CD8-positive, alpha-beta T cell (primary cell): ENCODE measurements at regions of chr15 and their contacts with region 1.

Region 1: GRCh38 chr15:64893481-64894394 is 18.0 kb upstream of the ANKDD1A start:
- DNase-seq: peak; percentile 82 to 98 (median 95)
- ATAC-seq: peak; percentile 70
- H3K4me3 ChIP-seq: peak overlapping the region; percentile 42 to 64
- H3K4me3 Mint-ChIP-seq: peak overlapping the region; percentile 87
- H3K27ac ChIP-seq: peak overlapping the region; percentile 73 to 88
- H3K27ac Mint-ChIP-seq: peak overlapping the region; percentile 99
- H3K4me1 ChIP-seq: peaks cover 57% of the 10 kb centered on the region
- H3K4me1 Mint-ChIP-seq: peaks cover 66% of the 10 kb centered on the region
- H3K27me3 ChIP-seq: no peaks in the 10 kb centered on the region
- H3K27me3 Mint-ChIP-seq: no peaks in the 10 kb centered on the region
- CTCF ChIP-seq: no peak

Region 2: DNA sequence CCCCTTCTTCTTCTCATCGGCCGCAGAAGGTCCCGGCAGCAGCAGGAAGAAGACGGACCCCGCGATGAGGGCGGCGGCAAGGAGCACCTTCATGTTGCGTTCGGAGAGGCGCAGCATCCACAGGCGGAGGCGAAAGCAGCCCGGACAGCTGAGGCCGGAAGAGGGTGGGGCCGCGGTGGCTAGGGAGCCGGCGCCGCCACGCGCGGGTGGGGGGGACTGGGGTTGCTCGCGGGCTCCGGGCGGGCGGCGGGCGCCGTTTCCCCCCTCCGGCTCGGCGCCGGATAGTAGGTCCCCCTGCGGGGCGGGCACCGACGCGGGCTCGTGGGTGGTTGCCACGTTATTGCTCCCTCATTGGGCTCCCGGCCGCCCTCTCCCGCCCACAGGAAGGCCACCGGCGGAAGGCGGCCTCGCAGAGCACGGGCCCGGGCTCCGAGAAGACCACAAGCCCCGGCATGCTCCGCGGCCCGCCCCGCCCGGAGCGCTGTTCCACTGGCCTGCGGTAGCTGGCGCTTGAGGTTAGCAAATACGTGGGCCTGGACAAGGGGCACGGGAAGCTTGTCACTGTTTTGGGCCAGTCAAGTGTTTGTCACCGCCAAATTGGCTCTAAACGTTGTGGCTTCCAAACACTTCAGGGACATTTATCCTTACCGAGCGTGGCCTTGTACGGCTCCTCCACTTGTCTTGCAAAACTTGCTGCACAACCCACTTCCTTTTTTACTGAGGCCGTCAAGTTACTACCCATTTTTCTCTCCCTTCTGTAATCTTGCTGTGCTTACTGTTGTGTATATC is 730.7 kb before region 1 on chr15 and contains the start of gene PPIB:
- CTCF ChIA-PET with region 1: no interaction called
- POLR2A ChIA-PET with region 1: interaction called, 6 read pairs
- intact Hi-C with region 1: loop called in 1 of 2 experiments (anchors 1 kb)
- DNase-seq: peak; percentile 93 to 98 (median 96)
- ATAC-seq: peak; percentile 93
- H3K4me3 ChIP-seq: peak within 1 kb of the TSS; percentile 88 to 92
- H3K4me3 Mint-ChIP-seq: peak within 1 kb of the TSS; percentile 90
- H3K27ac ChIP-seq: peak within 1 kb of the TSS; percentile 79 to 88
- H3K27ac Mint-ChIP-seq: peak within 1 kb of the TSS; percentile 87
- H3K4me1 ChIP-seq: peaks cover 38% of the 10 kb centered on the region
- H3K4me1 Mint-ChIP-seq: peaks cover 41% of the 10 kb centered on the region
- H3K27me3 ChIP-seq: no peaks in the 10 kb centered on the region
- H3K27me3 Mint-ChIP-seq: no peaks in the 10 kb centered on the region
- CTCF ChIP-seq: no peak
- total RNA-seq, gene PPIB: 148 to 156 TPM

Region 3: DNA sequence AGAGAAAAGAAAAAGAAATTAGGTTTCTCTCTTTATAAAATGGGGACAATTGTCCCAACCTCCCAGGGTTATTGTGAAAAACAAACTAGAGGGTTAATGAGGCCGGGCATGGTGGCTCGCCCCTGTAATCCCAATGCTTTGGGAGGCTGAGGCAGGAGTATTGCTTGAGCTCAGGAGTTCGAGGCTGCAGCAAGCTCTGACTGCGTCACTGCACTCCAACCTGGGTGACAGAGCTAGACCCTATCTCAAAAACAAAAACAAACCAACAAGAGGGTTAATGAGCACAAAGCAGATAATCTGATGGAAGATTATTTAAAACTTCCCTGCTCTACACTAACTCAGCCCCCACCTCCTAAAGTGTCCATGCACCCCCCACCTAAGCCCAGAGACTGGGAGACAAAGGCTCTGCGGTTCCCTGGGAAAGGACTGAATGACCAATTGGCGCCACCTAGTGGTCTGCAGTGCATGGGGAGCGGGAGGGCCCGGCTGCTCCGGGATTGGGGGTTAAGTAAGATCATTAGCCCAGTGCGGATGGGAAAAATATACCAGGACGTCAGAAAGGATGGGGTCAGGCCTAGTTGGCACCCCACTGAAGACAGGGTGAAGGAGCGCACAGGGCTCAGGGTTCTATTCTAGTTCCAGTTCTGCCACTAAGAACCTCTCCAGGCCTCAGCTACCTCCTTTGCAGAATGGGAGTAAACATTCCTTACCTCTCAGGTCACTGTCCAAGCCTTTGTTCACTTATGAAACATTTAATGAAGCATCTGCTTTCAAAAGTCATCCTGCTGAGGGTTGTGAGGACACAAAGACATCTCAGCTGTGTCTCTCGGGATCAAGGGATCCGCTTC is 83.9 kb before region 1 on chr15:
- CTCF ChIA-PET with region 1: interaction called, 18 read pairs
- POLR2A ChIA-PET with region 1: interaction called, 3 read pairs
- intact Hi-C with region 1: no loop called
- DNase-seq: peak; percentile 27 to 78 (median 67)
- ATAC-seq: peak; percentile 71
- H3K4me3 ChIP-seq: no peak overlapping the region
- H3K4me3 Mint-ChIP-seq: no peak overlapping the region
- H3K27ac ChIP-seq: no peak overlapping the region
- H3K27ac Mint-ChIP-seq: no peak overlapping the region
- H3K4me1 ChIP-seq: no peaks in the 10 kb centered on the region
- H3K4me1 Mint-ChIP-seq: peaks cover 2% of the 10 kb centered on the region
- H3K27me3 ChIP-seq: no peaks in the 10 kb centered on the region
- H3K27me3 Mint-ChIP-seq: peaks cover 2% of the 10 kb centered on the region
- CTCF ChIP-seq: peak; percentile 88

Region 4: DNA sequence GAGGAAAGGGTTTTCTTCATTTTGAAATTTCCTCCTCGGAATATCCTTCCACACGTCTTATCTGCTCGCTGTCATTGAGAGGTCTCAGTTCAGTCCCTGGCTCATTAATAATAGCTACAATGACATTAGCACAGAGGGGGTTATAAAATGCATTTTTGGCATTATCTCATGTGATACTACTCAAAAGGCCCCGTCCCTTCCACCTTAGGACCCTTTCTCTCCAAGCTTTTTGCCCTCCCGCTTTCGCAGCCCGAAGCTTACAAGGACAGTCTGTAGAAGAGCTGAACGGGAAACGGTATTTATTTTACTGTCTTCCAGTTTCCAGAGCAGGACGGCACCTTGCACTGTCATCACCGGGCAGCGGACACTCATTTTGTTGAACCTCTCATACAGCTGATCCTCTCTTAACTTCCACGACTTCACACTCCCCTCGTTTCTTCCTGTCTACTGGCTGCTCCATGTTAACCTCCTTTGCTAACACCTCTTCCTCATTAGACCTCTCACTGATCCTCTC is 57.7 kb before region 1 on chr15:
- CTCF ChIA-PET with region 1: interaction called, 22 read pairs
- POLR2A ChIA-PET with region 1: interaction called, 32 read pairs
- intact Hi-C with region 1: loop called (anchors 1 kb)
- DNase-seq: no peak
- ATAC-seq: no peak
- H3K4me3 ChIP-seq: no peak overlapping the region
- H3K4me3 Mint-ChIP-seq: no peak overlapping the region
- H3K27ac ChIP-seq: no peak overlapping the region
- H3K27ac Mint-ChIP-seq: peak overlapping the region; percentile 43
- H3K4me1 ChIP-seq: peaks cover 53% of the 10 kb centered on the region
- H3K4me1 Mint-ChIP-seq: peaks cover 49% of the 10 kb centered on the region
- H3K27me3 ChIP-seq: no peaks in the 10 kb centered on the region
- H3K27me3 Mint-ChIP-seq: no peaks in the 10 kb centered on the region
- CTCF ChIP-seq: no peak

Region 5: DNA sequence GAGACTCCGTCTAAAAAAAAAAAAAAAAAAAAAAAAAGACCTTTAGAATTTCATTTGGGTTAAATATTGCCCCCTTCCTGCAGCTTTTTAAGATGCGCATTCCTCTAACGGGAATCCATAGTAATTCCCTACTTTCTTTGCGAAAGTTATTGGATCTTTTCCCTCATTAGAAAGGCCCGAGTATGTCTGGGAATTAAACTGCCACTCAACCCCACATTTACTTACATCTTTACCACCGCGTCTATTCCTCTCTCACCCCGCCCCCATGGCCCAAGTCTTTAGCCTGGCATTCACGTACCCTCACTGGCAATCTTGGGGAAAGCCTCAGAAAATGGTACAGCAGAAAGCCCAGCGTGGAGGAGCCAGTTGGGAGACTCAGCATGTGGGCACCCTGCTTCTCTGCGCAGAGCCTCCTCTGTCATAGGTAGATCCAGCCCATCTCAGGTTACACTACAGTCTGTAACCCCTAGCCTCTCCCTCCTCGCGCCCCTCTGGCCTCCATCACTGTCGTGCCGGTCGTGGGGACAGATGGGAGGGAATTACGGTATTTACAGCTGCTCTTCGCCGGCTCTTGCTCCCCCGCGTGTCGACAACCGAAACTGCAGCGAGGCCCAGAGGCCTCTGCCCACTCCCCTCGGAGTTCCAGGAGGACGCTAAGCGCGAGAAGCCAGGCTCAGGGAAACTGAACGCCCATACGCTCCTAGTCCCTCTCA is 11.5 kb after region 1 on chr15:
- CTCF ChIA-PET with region 1: interaction called, 42 read pairs
- POLR2A ChIA-PET with region 1: interaction called, 17 read pairs
- intact Hi-C with region 1: loop called in 1 of 2 experiments (anchors 1 kb)
- DNase-seq: peak; percentile 60 to 86 (median 79)
- ATAC-seq: peak; percentile 81
- H3K4me3 ChIP-seq: peak overlapping the region; percentile 11 to 21
- H3K4me3 Mint-ChIP-seq: peak overlapping the region; percentile 69
- H3K27ac ChIP-seq: no peak overlapping the region
- H3K27ac Mint-ChIP-seq: no peak overlapping the region
- H3K4me1 ChIP-seq: peaks cover 25% of the 10 kb centered on the region
- H3K4me1 Mint-ChIP-seq: peaks cover 37% of the 10 kb centered on the region
- H3K27me3 ChIP-seq: no peaks in the 10 kb centered on the region
- H3K27me3 Mint-ChIP-seq: peaks cover 4% of the 10 kb centered on the region
- CTCF ChIP-seq: peak; percentile 87